PC-3 (cell line): ENCODE measurements at regions of chr21 and their contacts with region 1.

Region 1: DNA sequence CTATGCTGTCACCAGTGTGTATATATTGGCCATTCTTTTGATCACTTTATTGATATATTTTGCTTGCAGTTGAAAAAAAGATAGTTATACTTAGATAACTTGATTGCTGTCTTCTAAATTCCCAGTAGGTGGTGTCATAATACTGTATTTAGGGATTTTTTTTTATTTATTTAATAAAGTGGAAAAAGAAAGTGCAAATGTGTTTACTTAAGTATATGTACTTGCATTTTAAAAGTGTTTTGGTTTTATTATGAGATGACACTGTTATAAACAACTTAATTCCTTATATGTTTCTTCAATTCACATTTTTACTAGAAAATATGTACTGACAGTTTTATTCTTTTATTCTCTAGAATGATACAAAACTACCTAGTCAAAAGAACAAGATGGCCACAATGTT is 164.8 kb downstream of the USP25 start:
- DNase-seq: peak; percentile 41
- ATAC-seq: peak; percentile 43
- H3K4me3 ChIP-seq: no peak overlapping the region
- H3K27ac ChIP-seq: no peak overlapping the region
- H3K4me1 ChIP-seq: no peaks in the 10 kb centered on the region
- H3K27me3 ChIP-seq: no peaks in the 10 kb centered on the region
- CTCF ChIP-seq: peak; percentile 70

Region 2: DNA sequence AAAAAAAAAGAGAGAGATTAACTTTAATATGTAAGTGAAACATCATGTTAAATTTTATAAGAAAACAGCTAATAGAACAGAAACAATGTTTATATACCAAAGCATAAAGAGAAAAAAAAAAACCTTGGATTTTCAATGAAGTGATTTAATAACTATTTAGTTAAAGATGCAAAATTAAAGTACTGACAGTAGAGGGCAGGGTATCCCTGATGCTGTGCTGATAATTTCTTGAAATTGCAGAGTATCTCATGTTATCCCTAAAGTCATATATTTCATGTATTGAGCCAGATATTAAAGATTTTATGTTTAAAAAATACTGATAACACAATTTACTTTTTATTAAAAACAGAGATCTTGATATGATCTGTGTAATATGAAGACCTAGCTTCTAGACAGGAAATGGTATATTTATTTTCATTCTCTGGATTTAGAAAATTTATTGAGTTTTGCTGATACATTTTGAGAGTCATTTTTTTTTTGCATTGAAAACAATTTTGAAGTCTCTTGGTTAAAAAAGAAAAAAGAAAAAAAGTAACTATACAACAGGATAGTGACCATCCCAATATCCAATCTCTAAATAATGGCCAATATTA is 108.4 kb after region 1 on chr21:
- CTCF ChIA-PET with region 1: no interaction called
- POLR2A ChIA-PET with region 1: no interaction called
- intact Hi-C with region 1: loop called (anchors 5 kb)
- DNase-seq: peak; percentile 58
- ATAC-seq: peak; percentile 62
- H3K4me3 ChIP-seq: no peak overlapping the region
- H3K27ac ChIP-seq: no peak overlapping the region
- H3K4me1 ChIP-seq: no peaks in the 10 kb centered on the region
- H3K27me3 ChIP-seq: no peaks in the 10 kb centered on the region
- CTCF ChIP-seq: peak; percentile 78

Region 3: DNA sequence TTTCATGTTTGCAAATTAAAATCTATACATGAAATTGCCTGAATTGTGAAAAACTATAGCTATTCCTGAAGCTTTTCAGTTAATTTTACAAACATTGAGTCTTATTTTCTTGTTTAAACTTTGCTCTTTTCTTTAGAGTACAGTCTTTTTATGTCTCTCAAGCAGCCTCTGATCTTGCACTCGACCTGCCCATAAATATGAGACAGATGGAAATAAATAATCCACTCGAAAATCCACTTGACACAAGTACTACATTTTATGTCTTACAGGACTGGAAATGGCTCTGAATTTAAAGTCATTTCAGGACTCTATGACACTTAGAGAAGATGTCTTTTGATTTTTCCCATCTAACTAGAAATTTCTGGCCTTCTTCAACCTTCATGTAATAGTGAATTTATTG is 119.0 kb after region 1 on chr21:
- CTCF ChIA-PET with region 1: no interaction called
- POLR2A ChIA-PET with region 1: no interaction called
- intact Hi-C with region 1: no loop called
- DNase-seq: no peak
- ATAC-seq: no peak
- H3K4me3 ChIP-seq: no peak overlapping the region
- H3K27ac ChIP-seq: no peak overlapping the region
- H3K4me1 ChIP-seq: no peaks in the 10 kb centered on the region
- H3K27me3 ChIP-seq: peaks cover 6% of the 10 kb centered on the region; the same call in 1 of the 2 replicates
- CTCF ChIP-seq: no peak